OCI-LY7 (cell line): ENCODE measurements at regions of chrX and their contacts with region 1.

Region 1: GRCh38 chrX:126456136-126456535 is 96.5 kb downstream of the DCAF12L1 start:
- DNase-seq: no peak
- H3K4me3 ChIP-seq: no peak overlapping the region
- H3K27ac ChIP-seq: no peak overlapping the region
- H3K4me1 ChIP-seq: no peaks in the 10 kb centered on the region
- CTCF ChIP-seq: no peak

Region 2: GRCh38 chrX:125947501-125947900 is 508.6 kb before region 1 on chrX:
- CTCF ChIA-PET with region 1: no interaction called
- POLR2A ChIA-PET with region 1: interaction called, 13 read pairs
- intact Hi-C with region 1: no loop called
- DNase-seq: no peak
- H3K4me3 ChIP-seq: no peak overlapping the region
- H3K27ac ChIP-seq: no peak overlapping the region
- H3K4me1 ChIP-seq: no peaks in the 10 kb centered on the region
- CTCF ChIP-seq: no peak

Region 3: DNA sequence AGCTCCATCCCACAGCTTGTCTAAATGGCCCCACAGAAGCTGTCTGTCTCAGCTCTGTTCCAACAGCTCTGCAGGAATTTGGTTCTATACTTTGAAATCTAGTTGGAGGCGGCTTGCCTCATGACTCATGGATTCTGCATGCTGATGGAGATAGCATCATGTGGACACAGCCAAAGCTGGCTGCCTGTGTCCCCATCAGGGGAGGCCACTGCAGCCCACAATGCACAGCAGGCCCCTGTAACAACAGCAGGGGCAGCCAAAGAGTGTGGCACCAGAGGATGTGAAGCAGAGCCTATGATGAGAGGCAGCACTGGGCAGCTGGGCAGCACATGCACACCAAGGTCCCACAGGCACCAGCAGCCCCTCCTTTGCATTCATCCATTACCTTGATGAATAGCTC is 29.3 kb after region 1 on chrX:
- CTCF ChIA-PET with region 1: no interaction called
- POLR2A ChIA-PET with region 1: no interaction called
- intact Hi-C with region 1: no loop called
- DNase-seq: no peak
- H3K4me3 ChIP-seq: no peak overlapping the region
- H3K27ac ChIP-seq: no peak overlapping the region
- H3K4me1 ChIP-seq: no peaks in the 10 kb centered on the region
- CTCF ChIP-seq: no peak

Region 4: DNA sequence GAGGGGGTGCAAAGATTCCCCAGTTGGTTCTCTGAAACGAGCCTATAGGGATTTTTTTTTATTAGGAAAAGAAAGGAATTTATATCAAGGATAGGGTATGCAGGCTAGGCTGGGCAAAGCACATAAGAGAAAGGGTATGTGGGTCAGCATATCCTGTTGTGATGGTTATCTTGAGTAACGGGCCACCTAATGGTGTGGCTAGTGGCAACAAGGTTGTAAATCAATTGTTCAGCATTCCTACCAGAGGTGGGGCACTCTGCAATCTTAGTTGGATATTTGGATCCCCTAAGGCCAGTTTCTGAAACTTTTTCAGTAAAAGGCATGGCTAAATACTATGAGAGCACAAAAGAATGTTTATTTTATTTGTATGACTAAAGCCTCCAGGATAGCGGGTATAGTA is 53.8 kb after region 1 on chrX:
- CTCF ChIA-PET with region 1: no interaction called
- POLR2A ChIA-PET with region 1: no interaction called
- intact Hi-C with region 1: no loop called
- DNase-seq: no peak
- H3K4me3 ChIP-seq: no peak overlapping the region
- H3K27ac ChIP-seq: no peak overlapping the region
- H3K4me1 ChIP-seq: no peaks in the 10 kb centered on the region
- CTCF ChIP-seq: no peak